ENCODE measurements at regions of chr6 and their contacts with region 1.

Region 1: DNA sequence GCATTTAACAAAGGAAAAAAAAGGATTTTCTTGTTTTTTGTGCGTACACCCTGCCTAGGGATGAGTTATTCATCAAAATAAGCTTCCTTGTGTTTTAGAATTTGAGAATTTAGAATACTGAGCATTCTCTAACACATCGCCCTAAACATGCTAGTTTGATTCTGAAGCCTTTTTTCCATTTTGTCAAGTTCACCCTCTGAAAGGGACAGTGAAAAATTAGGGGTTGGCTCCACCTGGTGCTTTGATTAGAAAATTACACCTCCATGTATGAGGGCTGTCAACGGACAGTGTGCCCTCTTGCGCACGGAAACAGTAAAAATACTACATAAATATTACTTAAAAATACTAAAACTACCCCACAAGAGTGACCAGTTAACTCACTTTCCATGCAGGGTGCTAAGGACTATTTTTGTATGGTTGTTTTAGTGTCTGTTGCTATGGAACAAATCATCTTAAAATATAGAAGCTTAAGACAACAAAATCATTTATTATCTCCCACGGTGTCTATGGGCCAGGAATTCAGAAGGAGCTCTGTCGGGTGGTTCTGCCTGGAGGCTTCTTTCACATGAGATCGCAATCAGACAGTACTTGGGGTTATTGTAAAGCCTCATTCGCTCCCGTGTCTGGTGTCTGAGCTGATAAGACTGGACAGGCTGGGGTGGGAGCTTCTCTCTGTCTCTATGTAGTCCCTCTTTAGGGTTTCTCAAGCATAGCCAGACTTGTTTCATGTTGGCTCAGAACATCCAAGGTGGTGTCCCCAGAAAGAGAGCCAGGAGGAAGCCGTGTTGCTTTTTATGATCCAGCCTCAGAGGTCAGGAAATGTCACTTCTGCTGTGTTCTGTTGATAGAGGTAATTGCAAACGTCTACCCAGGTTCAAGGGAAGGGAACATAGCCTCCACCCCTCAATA is 41.1 kb upstream of the TMEM170B start:
- DNase-seq: peak; percentile 70
- H3K4me3 ChIP-seq: no peak overlapping the region; a peak in 1 of 4 replicates
- H3K27ac ChIP-seq: peak overlapping the region; percentile 45 to 91
- H3K4me1 ChIP-seq: peaks cover 4 to 24% of the 10 kb centered on the region in 2 experiments; a peak in 3 of 4 replicates
- H3K27me3 ChIP-seq: no peaks in the 10 kb centered on the region
- CTCF ChIP-seq: peak; percentile 96
- EP300 ChIP-seq: peak in 1 of 2 experiments; percentile 61; a peak in 1 of 4 replicates
- RAD21 ChIP-seq: peak; percentile 98

Region 2: DNA sequence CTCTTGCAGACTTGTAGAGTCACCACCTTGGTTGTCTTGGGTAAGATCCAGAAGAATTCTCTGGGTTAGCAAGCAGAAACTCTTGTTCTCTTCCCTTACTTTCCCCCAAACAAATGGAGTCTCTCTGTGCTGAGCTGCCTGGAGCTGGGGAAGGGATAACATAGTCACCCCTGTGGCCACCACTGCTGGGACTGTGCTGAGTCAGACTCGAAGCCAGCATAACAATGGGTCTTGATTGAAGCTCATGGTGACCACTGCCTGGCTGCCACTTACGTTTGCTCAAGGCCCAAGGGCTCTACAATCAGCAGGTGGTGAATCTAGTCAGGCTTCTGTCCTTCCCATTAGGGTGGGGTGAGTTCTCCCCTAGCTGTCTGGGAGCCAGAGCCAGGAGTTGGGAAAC is 369.5 kb before region 1 on chr6:
- CTCF ChIA-PET with region 1: interaction called, 17 read pairs
- POLR2A ChIA-PET with region 1: no interaction called
- DNase-seq: no peak
- H3K4me3 ChIP-seq: no peak overlapping the region
- H3K27ac ChIP-seq: no peak overlapping the region
- H3K4me1 ChIP-seq: peaks cover 0 to 9% of the 10 kb centered on the region in 2 experiments; a peak in 2 of 4 replicates
- H3K27me3 ChIP-seq: no peaks in the 10 kb centered on the region
- CTCF ChIP-seq: no peak
- EP300 ChIP-seq: no peak
- RAD21 ChIP-seq: no peak

Region 3: GRCh38 chr6:11188161-11188915 is 308.1 kb before region 1 on chr6:
- CTCF ChIA-PET with region 1: interaction called, 14 read pairs
- POLR2A ChIA-PET with region 1: no interaction called
- DNase-seq: no peak
- H3K4me3 ChIP-seq: no peak overlapping the region
- H3K27ac ChIP-seq: peak overlapping the region in 1 of 2 experiments; percentile 37; a peak in 3 of 4 replicates
- H3K4me1 ChIP-seq: no peaks in the 10 kb centered on the region; a peak in 1 of 4 replicates
- H3K27me3 ChIP-seq: no peaks in the 10 kb centered on the region
- CTCF ChIP-seq: no peak
- EP300 ChIP-seq: no peak
- RAD21 ChIP-seq: no peak

Region 4: GRCh38 chr6:11263291-11263775 is 233.1 kb before region 1 on chr6:
- CTCF ChIA-PET with region 1: interaction called, 16 read pairs
- POLR2A ChIA-PET with region 1: no interaction called
- DNase-seq: no peak
- H3K4me3 ChIP-seq: no peak overlapping the region
- H3K27ac ChIP-seq: peak overlapping the region; percentile 3 to 20; a peak in 2 of 4 replicates
- H3K4me1 ChIP-seq: peaks cover 9 to 12% of the 10 kb centered on the region in 2 experiments; a peak in 3 of 4 replicates
- H3K27me3 ChIP-seq: no peaks in the 10 kb centered on the region
- CTCF ChIP-seq: no peak
- EP300 ChIP-seq: no peak
- RAD21 ChIP-seq: no peak

Region 5: GRCh38 chr6:11485271-11485670 is 11.1 kb before region 1 on chr6:
- CTCF ChIA-PET with region 1: interaction called, 20 read pairs
- POLR2A ChIA-PET with region 1: no interaction called
- DNase-seq: peak; percentile 38
- H3K4me3 ChIP-seq: no peak overlapping the region
- H3K27ac ChIP-seq: no peak overlapping the region
- H3K4me1 ChIP-seq: peaks cover 0 to 3% of the 10 kb centered on the region in 2 experiments; a peak in 1 of 4 replicates
- H3K27me3 ChIP-seq: no peaks in the 10 kb centered on the region
- CTCF ChIP-seq: no peak
- EP300 ChIP-seq: no peak
- RAD21 ChIP-seq: no peak

Region 6: DNA sequence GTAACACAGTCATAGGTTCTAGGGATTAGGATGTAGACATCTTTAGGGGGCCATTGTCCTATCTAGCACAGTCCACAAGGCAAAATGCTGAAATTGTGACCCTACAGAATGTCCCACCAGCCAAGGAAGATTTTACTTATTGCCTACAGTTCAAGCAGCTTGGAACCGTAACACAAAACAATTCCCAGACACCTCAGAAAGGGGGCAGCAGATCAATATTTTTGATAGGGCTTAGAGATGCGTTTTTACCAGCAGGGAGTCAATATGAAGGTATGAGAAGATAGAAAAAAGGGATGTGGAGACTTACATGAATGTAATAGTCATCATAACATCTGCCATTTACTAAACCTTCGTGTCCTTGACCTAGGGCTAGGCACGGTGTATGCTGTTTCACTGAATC is 122.1 kb after region 1 on chr6:
- CTCF ChIA-PET with region 1: no interaction called
- POLR2A ChIA-PET with region 1: no interaction called
- DNase-seq: no peak
- H3K4me3 ChIP-seq: no peak overlapping the region
- H3K27ac ChIP-seq: no peak overlapping the region
- H3K4me1 ChIP-seq: peaks cover 0 to 16% of the 10 kb centered on the region in 2 experiments; a peak in 1 of 4 replicates
- H3K27me3 ChIP-seq: no peaks in the 10 kb centered on the region
- CTCF ChIP-seq: peak; percentile 47
- EP300 ChIP-seq: no peak
- RAD21 ChIP-seq: peak; percentile 33